Naive thymus-derived CD4-positive, alpha-beta T cell (primary cell): ENCODE measurements at regions of chr12 and their contacts with region 1.

Region 1: GRCh38 chr12:15050659-15051058 is 77.8 kb downstream of the PDE6H start:
- DNase-seq: peak in 3 of 9 donors; percentile 34 to 56 (median 36)
- ATAC-seq: no peak
- H3K4me3 ChIP-seq: no peak overlapping the region
- H3K4me3 Mint-ChIP-seq: peak overlapping the region in 3 of 10 donors; percentile 50 to 61 (median 54)
- H3K27ac ChIP-seq: no peak overlapping the region
- H3K27ac Mint-ChIP-seq: peak overlapping the region in 1 of 9 donors; percentile 57
- H3K4me1 ChIP-seq: peaks cover 0 to 3% of the 10 kb centered on the region in 2 donors
- H3K4me1 Mint-ChIP-seq: peaks cover 0 to 31% (median 0%) of the 10 kb centered on the region in 7 donors
- H3K27me3 ChIP-seq: no peaks in the 10 kb centered on the region
- H3K27me3 Mint-ChIP-seq: peaks cover 0 to 18% (median 12%) of the 10 kb centered on the region in 5 donors

Region 2: GRCh38 chr12:15011162-15011561 is 39.5 kb before region 1 on chr12:
- CTCF ChIA-PET with region 1: no interaction called
- POLR2A ChIA-PET with region 1: no interaction called
- intact Hi-C with region 1: loop called in 1 of 2 experiments (anchors 5 kb)
- DNase-seq: no peak
- ATAC-seq: no peak
- H3K4me3 ChIP-seq: no peak overlapping the region
- H3K4me3 Mint-ChIP-seq: no peak overlapping the region
- H3K27ac ChIP-seq: no peak overlapping the region
- H3K27ac Mint-ChIP-seq: no peak overlapping the region
- H3K4me1 ChIP-seq: no peaks in the 10 kb centered on the region
- H3K4me1 Mint-ChIP-seq: no peaks in the 10 kb centered on the region
- H3K27me3 ChIP-seq: no peaks in the 10 kb centered on the region
- H3K27me3 Mint-ChIP-seq: peaks cover 11 to 28% (median 18%) of the 10 kb centered on the region in 5 donors

Region 3: GRCh38 chr12:15074351-15074750 is 23.7 kb after region 1 on chr12:
- CTCF ChIA-PET with region 1: interaction called, 4 read pairs
- POLR2A ChIA-PET with region 1: interaction called, 4 read pairs
- intact Hi-C with region 1: loop called in 1 of 2 experiments (anchors 1 kb)
- DNase-seq: no peak
- ATAC-seq: no peak
- H3K4me3 ChIP-seq: no peak overlapping the region
- H3K4me3 Mint-ChIP-seq: no peak overlapping the region
- H3K27ac ChIP-seq: no peak overlapping the region
- H3K27ac Mint-ChIP-seq: no peak overlapping the region
- H3K4me1 ChIP-seq: peaks cover 0 to 3% of the 10 kb centered on the region in 2 donors
- H3K4me1 Mint-ChIP-seq: peaks cover 0 to 16% (median 12%) of the 10 kb centered on the region in 7 donors
- H3K27me3 ChIP-seq: no peaks in the 10 kb centered on the region
- H3K27me3 Mint-ChIP-seq: peaks cover 8 to 25% (median 23%) of the 10 kb centered on the region in 5 donors